GM10248 (cell line): ENCODE measurements at regions of chr11 and their contacts with region 1.

Region 1: DNA sequence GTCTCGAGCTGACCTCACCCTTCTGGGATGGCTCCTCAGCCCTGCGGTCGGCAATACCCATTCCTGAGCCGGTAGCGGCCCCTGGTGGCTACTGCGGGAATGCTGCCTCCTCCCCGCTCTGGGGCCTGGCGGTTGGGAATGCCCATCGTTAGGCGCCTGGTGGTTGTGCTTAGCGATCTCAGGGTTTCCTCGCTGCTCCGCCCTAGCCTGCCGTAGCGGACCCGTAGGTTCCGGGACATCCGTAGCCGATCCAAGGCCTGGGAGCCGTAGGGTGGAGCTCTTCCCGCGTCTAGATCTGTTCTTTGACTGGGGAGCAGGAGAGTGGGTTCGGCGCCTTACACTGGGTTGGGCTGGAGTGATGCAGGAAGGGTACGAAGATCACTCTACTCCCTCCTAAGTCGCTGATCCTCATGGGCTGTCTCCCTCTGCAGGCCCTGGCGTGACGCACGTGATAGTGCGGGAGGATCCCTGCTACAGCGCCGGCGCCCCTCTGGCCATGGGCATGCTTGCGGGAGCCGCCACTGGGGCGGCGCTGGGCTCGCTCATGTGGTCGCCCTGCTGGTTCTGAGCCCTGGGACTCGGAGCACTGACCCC is 14.8 kb downstream of the PLEKHB1 start:
- DNase-seq: peak; percentile 96
- CTCF ChIP-seq: peak; percentile 99

Region 2: DNA sequence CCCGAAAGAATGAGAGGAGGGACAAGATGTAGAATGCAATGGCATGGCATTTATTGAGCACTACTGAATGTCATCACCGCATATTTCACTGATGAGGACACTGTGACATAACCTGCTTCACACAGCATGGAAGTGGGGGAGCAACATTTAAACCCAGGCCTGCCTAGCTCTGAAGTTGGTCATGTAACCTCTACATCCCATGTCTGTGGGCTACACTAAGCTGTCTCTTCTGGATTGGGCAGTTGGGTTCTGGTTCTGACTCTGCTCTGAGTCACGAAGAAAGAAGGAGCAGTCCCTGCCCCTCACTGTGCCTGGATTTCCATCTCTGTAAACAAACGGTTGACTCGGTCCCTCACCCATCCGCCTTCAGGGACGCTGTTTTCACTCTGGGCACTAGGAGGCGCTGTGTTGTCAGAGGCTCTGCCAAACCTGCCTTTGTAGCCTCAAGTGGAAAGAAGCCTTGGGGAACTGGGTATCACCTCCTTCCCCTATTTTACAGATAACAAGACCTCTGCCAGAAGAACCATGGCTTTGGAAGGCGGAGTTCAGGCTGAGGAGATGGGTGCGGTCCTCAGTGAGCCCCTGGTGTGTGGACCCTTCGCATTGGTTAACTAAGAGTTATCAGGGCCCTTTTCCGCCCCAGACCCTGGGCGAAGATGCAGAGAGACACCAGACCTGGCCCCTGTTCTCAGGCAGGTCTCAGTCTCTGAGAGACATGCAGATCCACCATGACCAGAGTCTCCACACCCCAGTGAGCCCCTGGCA is 365.7 kb before region 1 on chr11:
- CTCF ChIA-PET with region 1: interaction called, 17 read pairs
- POLR2A ChIA-PET with region 1: no interaction called
- DNase-seq: peak; percentile 82
- CTCF ChIP-seq: peak; percentile 99

Region 3: GRCh38 chr11:73350908-73351636 is 310.1 kb before region 1 on chr11:
- CTCF ChIA-PET with region 1: interaction called, 160 read pairs
- POLR2A ChIA-PET with region 1: no interaction called
- DNase-seq: peak; percentile 85
- CTCF ChIP-seq: peak; percentile 94

Region 4: GRCh38 chr11:73404048-73404447 is 257.1 kb before region 1 on chr11:
- CTCF ChIA-PET with region 1: interaction called, 67 read pairs
- POLR2A ChIA-PET with region 1: no interaction called
- DNase-seq: peak; percentile 18
- CTCF ChIP-seq: peak; percentile 21

Region 5: GRCh38 chr11:73612601-73613140 is 48.5 kb before region 1 on chr11:
- CTCF ChIA-PET with region 1: interaction called, 17 read pairs
- POLR2A ChIA-PET with region 1: no interaction called
- DNase-seq: no peak
- CTCF ChIP-seq: no peak

Region 6: DNA sequence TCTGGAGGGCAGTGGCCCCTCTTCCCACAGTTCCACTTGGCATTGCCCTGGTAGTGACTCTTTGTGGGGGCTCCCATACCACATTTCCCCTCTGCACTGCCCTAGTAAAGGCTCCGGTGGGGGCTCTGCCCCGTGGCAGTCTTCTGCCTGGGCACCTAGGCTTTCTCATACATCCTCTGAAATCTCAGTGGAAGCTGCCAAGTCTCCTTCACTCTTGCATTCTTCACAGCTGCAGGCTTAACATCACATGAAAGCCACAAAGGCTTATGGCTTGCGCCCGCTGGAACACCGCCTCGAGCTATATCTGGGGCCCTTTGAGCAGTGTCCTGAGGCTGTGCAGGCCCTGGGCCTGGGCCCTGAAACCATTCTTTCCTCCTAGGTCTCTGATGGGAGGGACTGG is 10.6 kb after region 1 on chr11:
- CTCF ChIA-PET with region 1: interaction called, 38 read pairs
- POLR2A ChIA-PET with region 1: no interaction called
- DNase-seq: no peak
- CTCF ChIP-seq: no peak